Natural killer cell (primary cell): ENCODE measurements at regions of chr3 and their contacts with region 1.

Region 1: GRCh38 chr3:51501833-51502561 is 2.2 kb upstream of the DCAF1 start:
- DNase-seq: peak; percentile 77 to 92
- ATAC-seq: peak in 2 of 3 donors; percentile 20 to 22
- H3K4me3 ChIP-seq: no peak overlapping the region
- H3K4me3 Mint-ChIP-seq: no peak overlapping the region
- H3K27ac ChIP-seq: no peak overlapping the region
- H3K27ac Mint-ChIP-seq: peak overlapping the region; percentile 95 to 97
- H3K4me1 ChIP-seq: peaks cover 10% of the 10 kb centered on the region
- H3K4me1 Mint-ChIP-seq: peaks cover 15 to 19% of the 10 kb centered on the region in 2 donors
- H3K27me3 ChIP-seq: no peaks in the 10 kb centered on the region
- H3K27me3 Mint-ChIP-seq: no peaks in the 10 kb centered on the region
- CTCF ChIP-seq: peak; percentile 79

Region 2: GRCh38 chr3:51391075-51391567 is 110.9 kb before region 1 on chr3 and contains the start of gene RBM15B:
- intact Hi-C with region 1: loop called (anchors 1 kb)
- DNase-seq: peak; percentile 97 to 98
- ATAC-seq: peak; percentile 93 to 99 (median 94)
- H3K4me3 ChIP-seq: peak within 1 kb of the TSS; percentile 47
- H3K4me3 Mint-ChIP-seq: peak within 1 kb of the TSS; percentile 81
- H3K27ac ChIP-seq: peak within 1 kb of the TSS; percentile 77
- H3K27ac Mint-ChIP-seq: peak within 1 kb of the TSS; percentile 81 to 82
- H3K4me1 ChIP-seq: peaks cover 64% of the 10 kb centered on the region
- H3K4me1 Mint-ChIP-seq: peaks cover 40 to 51% of the 10 kb centered on the region in 2 donors
- H3K27me3 ChIP-seq: no peaks in the 10 kb centered on the region
- H3K27me3 Mint-ChIP-seq: no peaks in the 10 kb centered on the region
- CTCF ChIP-seq: peak; percentile 82
- total RNA-seq, gene RBM15B: 23.7 to 29.0 (median 28.6) TPM

Region 3: DNA sequence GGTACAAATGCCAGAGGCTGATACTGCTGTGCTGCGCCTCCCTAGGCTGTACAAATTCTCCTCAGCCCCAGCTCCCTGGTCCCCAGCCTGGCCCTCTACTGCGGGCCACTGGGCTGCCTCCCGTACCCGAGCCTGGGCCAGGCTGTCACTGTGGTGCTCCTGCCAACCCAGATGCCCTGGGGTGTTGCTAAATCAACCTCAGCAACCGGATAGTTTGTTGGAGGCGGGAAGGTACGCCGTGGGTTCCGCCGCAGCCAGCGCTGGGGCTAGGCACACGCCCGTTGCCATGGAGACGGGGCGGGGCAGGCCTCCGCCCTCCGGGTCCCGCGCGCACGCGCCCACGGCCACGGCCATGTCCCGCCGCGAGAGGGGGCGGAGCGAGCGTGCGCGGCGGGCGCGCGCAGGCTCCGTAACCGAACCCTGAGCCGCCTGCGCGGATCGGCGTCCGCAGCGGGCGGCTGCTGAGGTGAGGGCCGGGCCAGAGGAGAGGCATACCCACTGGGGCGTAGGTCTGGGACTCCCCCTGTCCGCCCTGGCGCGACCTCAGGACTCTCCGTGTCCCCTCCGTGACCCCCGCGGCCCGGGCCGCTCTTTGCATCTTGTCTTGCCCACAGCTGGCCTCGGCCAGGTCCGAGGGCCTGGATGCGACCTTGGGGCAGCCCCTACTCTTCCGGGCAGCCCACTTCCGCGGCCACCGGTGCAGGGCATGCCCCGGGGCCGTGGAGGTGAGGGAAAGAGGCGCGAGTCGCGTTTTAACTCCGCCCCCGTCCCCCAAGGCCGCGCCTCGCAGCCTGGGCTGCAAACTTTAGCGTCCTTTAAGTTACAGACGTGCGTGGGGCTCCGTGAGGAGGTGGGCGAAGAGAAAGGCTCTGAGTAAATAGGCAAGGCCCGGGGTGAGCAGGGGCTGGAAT is 169.1 kb after region 1 on chr3 and contains the start of gene TEX264:
- intact Hi-C with region 1: loop called (anchors 1 kb)
- DNase-seq: peak; percentile 86 to 100
- ATAC-seq: peak; percentile 69 to 89 (median 78)
- H3K4me3 ChIP-seq: peak within 1 kb of the TSS; percentile 86
- H3K4me3 Mint-ChIP-seq: peak within 1 kb of the TSS; percentile 92
- H3K27ac ChIP-seq: peak within 1 kb of the TSS; percentile 85
- H3K27ac Mint-ChIP-seq: peak within 1 kb of the TSS; percentile 87 to 98
- H3K4me1 ChIP-seq: peaks cover 58% of the 10 kb centered on the region
- H3K4me1 Mint-ChIP-seq: peaks cover 57 to 62% of the 10 kb centered on the region in 2 donors
- H3K27me3 ChIP-seq: no peaks in the 10 kb centered on the region
- H3K27me3 Mint-ChIP-seq: no peaks in the 10 kb centered on the region
- CTCF ChIP-seq: no peak
- total RNA-seq, gene TEX264: 41.1 to 46.8 (median 45.4) TPM

Region 4: GRCh38 chr3:51682079-51682478 is 180.1 kb after region 1 on chr3:
- intact Hi-C with region 1: loop called (anchors 1 kb)
- DNase-seq: peak; percentile 64 to 93
- ATAC-seq: peak; percentile 77 to 89 (median 85)
- H3K4me3 ChIP-seq: no peak overlapping the region
- H3K4me3 Mint-ChIP-seq: peak overlapping the region; percentile 86
- H3K27ac ChIP-seq: peak overlapping the region; percentile 57
- H3K27ac Mint-ChIP-seq: peak overlapping the region; percentile 81
- H3K4me1 ChIP-seq: peaks cover 94% of the 10 kb centered on the region
- H3K4me1 Mint-ChIP-seq: peaks cover 69 to 88% of the 10 kb centered on the region in 2 donors
- H3K27me3 ChIP-seq: no peaks in the 10 kb centered on the region
- H3K27me3 Mint-ChIP-seq: no peaks in the 10 kb centered on the region
- CTCF ChIP-seq: peak; percentile 85

Region 5: DNA sequence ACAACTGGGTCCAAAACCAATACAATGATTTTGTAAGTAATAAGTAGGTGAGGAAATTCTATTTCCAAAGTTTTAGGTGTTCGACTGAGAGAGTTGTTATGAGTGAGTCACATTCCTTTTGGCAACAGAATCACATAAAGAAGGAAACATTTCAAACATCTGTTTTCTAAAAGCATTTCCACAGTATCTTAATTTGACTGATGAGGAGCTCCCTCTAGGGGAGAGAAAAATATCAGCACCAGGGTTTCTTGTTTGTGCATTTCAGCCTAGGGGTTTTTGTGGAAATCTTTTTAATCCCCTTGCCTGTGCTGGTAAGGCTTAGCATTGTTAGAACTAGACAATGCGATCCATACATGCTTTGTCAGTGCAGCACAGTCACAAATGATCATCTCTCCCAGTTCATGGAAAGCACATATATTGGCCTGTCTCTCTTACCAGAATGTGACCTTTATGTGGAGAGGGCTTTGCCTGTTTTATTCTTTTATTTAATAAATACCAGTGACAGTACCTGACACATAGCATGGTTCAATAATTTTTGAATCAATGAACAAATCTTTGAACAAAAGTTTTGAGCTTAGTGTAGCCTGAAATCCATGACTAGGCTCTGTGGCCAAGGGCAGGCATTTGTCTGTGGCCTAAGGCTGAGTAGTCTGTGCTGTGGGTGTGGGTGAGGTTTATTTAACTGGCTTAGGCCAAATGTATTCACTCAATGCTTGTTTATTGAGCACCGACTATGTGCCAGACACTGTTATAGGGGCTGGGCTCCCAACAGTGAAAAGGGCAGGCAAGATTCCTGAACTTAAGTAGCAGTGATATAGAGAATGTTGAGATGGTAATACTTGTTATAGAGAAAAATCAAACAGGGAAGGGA is 298.1 kb after region 1 on chr3:
- intact Hi-C with region 1: loop called (anchors 1 kb)
- DNase-seq: peak in 1 of 2 donors; percentile 73
- ATAC-seq: peak; percentile 53 to 65 (median 62)
- H3K4me3 ChIP-seq: no peak overlapping the region
- H3K4me3 Mint-ChIP-seq: no peak overlapping the region
- H3K27ac ChIP-seq: no peak overlapping the region
- H3K27ac Mint-ChIP-seq: no peak overlapping the region
- H3K4me1 ChIP-seq: no peaks in the 10 kb centered on the region
- H3K4me1 Mint-ChIP-seq: peaks cover 0 to 10% of the 10 kb centered on the region in 2 donors
- H3K27me3 ChIP-seq: no peaks in the 10 kb centered on the region
- H3K27me3 Mint-ChIP-seq: peaks cover 16 to 35% of the 10 kb centered on the region in 2 donors
- CTCF ChIP-seq: peak; percentile 81